Activated T-helper 1 cell treated with anti-CD3 and anti-CD28 coated beads, Interleukin-12 subunit alpha, Interleukin-12 subunit beta, Interleukin-2, Interleukin-4 antibody, amounts not matched to agents 30 ng/mL and 10 ng/mL and 1 ng/mL, durations not matched to agents 14 hours and 24 hours and 36 hours (primary cell): ENCODE measurements at regions of chr2 and their contacts with region 1.

Region 1: GRCh38 chr2:147843864-147844696 is 749 bp upstream of the ACVR2A start:
- DNase-seq: peak; percentile 85
- H3K4me3 Mint-ChIP-seq: peak overlapping the region; percentile 95
- H3K27ac Mint-ChIP-seq: peak overlapping the region; percentile 84
- H3K4me1 Mint-ChIP-seq: peaks cover 35% of the 10 kb centered on the region
- H3K27me3 Mint-ChIP-seq: peaks cover 52% of the 10 kb centered on the region

Region 2: DNA sequence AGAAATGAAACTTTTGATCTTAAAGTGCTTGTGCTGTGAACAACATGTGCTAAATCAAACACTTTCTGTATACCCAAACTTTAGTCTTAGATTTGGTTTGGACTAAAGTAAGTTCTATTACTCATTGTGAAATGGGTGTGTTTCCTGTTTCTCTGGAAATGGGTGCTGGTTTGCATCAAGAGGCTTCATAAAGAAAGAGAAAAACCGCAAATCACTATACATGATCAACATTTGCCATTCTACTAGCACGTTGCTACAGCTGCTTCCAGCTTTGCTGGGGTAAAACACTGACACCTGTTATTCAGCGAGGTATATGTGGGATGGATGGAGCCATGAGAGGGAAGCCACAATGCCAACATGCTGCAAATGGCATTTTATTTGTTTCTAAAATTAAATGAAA is 546.3 kb before region 1 on chr2:
- intact Hi-C with region 1: loop called (anchors 1 kb)
- DNase-seq: peak; percentile 49
- H3K4me3 Mint-ChIP-seq: peak overlapping the region; percentile 36
- H3K27ac Mint-ChIP-seq: peak overlapping the region; percentile 89
- H3K4me1 Mint-ChIP-seq: peaks cover 72% of the 10 kb centered on the region
- H3K27me3 Mint-ChIP-seq: no peaks in the 10 kb centered on the region

Region 3: DNA sequence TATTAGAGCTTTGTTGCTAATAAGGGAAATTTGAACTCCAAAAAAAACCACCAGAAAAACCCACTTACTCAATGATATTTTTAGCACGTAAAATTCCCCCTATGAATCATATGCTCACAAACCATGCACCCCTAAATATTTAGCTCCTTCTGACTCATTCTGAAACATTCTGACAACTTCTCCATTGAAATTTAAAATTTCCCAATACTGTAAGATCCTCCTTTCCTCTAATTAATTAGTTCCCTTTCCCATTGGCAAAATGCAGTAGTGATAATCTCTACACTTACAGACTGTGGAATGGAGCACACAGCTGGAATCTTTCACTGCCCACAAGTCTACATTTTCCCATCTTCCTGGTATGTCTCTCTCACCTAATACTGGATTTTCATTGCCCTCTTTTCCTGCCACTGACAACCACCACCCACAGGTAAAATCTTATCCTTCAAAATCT is 215.1 kb before region 1 on chr2:
- intact Hi-C with region 1: loop called (anchors 2 kb)
- DNase-seq: no peak
- H3K4me3 Mint-ChIP-seq: peak overlapping the region; percentile 35
- H3K27ac Mint-ChIP-seq: peak overlapping the region; percentile 60
- H3K4me1 Mint-ChIP-seq: peaks cover 24% of the 10 kb centered on the region
- H3K27me3 Mint-ChIP-seq: no peaks in the 10 kb centered on the region

Region 4: GRCh38 chr2:147867050-147867449 is 23.0 kb after region 1 on chr2:
- intact Hi-C with region 1: loop called (anchors 2 kb)
- DNase-seq: no peak
- H3K4me3 Mint-ChIP-seq: no peak overlapping the region
- H3K27ac Mint-ChIP-seq: no peak overlapping the region
- H3K4me1 Mint-ChIP-seq: no peaks in the 10 kb centered on the region
- H3K27me3 Mint-ChIP-seq: peaks cover 4% of the 10 kb centered on the region

Region 5: DNA sequence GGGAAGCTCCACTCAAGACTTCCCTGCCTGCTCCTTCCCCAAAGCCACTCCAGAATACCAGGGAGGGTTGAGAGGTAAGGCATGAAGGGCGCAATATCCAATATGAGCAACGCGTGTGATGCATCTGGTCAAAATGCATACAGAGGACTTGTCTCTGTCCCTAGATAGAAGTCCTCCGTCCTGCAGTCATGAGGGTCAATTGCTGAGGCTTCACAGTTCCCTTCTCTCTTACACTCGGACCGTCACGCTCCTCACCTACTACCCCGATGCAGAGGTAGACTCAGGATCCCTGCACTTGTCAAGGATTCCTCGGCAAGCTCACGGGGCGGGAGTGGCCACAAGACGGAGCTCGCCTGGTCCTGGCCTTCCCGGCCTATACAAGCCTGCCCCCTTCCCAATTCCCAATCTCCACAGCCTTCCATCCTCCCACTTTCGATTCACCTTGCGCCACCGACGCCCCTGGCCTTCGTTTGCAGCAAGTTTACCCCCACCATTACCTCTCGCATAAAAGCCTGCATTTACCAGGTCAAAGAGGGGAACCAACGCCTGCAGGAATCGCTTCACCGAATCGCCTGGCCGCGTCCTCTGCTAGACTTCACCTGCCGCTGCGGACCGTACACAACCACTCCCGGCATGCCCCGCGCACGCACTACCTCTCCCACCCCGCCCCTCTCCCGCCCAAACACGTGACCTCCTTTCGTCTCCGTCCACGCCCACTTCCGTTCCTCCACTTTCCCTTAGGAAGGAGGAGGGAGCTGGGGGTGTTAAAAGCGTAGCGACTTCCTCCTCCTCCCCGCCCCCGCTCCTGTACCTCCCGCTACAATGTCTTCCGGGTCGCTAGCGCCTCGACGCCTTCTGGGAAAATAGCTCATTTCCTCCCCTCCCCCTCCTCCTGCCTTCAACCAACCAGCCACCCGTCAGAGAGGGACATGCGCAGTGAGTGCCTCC is 176.3 kb after region 1 on chr2 and contains the start of gene ORC4:
- intact Hi-C with region 1: loop called (anchors 1 kb)
- DNase-seq: peak; percentile 95
- H3K4me3 Mint-ChIP-seq: peak within 1 kb of the TSS; percentile 98
- H3K27ac Mint-ChIP-seq: peak within 1 kb of the TSS; percentile 95
- H3K4me1 Mint-ChIP-seq: peaks cover 40% of the 10 kb centered on the region
- H3K27me3 Mint-ChIP-seq: no peaks in the 10 kb centered on the region
- total RNA-seq, gene ORC4: 29.2 and 34.2 TPM in 2 replicates

Region 6: DNA sequence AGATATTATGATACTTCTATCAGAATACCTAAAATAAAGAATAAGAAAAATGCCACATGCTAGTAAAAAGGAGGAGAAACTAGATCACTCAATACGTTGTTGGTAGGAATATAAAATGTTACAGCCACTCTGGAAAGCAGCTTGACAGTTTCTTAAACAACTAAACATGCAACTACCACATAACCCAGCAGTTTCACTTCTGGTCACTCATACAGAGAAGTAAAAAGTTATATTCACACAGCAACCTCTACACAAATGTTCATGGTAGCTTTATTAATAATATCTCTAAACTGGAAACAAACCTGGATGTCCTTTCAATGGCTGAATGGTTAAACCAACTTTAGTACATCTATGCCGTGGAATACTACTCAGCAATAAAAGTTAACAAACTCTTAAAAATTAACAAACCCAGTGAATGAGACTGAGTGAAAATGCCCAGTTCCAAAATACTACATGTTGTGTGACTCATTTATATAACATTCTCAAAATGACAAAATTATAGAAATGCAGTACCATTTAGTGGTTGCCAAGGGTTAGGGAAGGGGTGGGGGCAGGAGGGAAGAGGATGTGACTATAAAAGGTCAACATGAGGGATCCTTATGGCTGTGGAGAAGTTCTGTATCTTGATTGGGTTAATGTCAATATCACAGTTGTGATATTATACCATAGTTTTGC is 1619.4 kb after region 1 on chr2:
- intact Hi-C with region 1: no loop called
- DNase-seq: no peak
- H3K4me3 Mint-ChIP-seq: no peak overlapping the region
- H3K27ac Mint-ChIP-seq: no peak overlapping the region
- H3K4me1 Mint-ChIP-seq: no peaks in the 10 kb centered on the region
- H3K27me3 Mint-ChIP-seq: peaks cover 6% of the 10 kb centered on the region

Region 7: DNA sequence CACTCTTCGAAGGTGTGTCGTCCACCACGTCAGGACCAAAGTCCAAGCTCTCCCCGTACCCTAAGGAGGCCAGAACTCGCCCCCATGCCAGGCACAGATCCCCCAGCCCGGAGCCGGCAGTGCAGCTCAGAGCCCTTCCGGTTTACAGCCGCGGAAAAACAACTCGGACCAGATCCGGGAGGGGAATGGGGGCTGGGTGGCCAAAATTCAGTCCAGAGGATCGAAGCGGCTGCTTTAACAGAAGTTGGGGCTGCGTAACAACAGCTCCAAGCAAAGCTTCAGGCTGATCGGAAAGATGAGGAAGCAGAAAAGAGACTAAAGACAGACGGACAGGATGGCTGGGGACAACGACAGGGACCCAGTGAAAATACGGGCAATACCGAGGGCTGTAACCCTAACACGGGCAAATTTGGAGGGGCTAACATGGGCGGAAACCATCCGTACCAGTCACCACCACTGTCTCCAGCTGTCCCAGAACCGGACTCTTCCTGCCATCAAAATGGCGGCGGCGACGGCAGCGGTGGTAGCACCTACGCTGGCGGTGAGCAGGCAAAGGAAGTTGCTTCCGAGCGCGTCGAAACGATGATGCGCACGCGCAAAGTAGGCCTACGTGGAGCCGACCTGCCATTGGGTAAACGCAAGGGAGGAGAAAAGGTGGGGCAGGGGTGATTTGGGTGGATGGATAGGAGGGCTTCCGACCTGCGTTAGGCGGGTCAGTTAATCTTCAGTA is 1743.3 kb after region 1 on chr2 and contains the start of gene MMADHC:
- intact Hi-C with region 1: loop called (anchors 5 kb)
- DNase-seq: peak; percentile 91
- H3K4me3 Mint-ChIP-seq: peak within 1 kb of the TSS; percentile 97
- H3K27ac Mint-ChIP-seq: peak within 1 kb of the TSS; percentile 99
- H3K4me1 Mint-ChIP-seq: peaks cover 43% of the 10 kb centered on the region
- H3K27me3 Mint-ChIP-seq: peaks cover 10% of the 10 kb centered on the region
- total RNA-seq, gene MMADHC: 127 and 129 TPM in 2 replicates